Activated CD8-positive, alpha-beta T cell treated with anti-CD3 and anti-CD28 coated beads for 36 hours (primary cell): ENCODE measurements at regions of chr10 and their contacts with region 1.

Region 1: GRCh38 chr10:11170993-11171851 is 153.6 kb downstream of the CELF2 start:
- DNase-seq: peak; percentile 81
- ATAC-seq: peak; percentile 62
- H3K4me3 Mint-ChIP-seq: no peak overlapping the region
- H3K27ac Mint-ChIP-seq: no peak overlapping the region
- H3K4me1 Mint-ChIP-seq: peaks cover 38% of the 10 kb centered on the region
- H3K27me3 Mint-ChIP-seq: no peaks in the 10 kb centered on the region
- CTCF ChIP-seq: no peak

Region 2: GRCh38 chr10:10765017-10765416 is 406.2 kb before region 1 on chr10:
- CTCF ChIA-PET with region 1: no interaction called
- POLR2A ChIA-PET with region 1: no interaction called
- intact Hi-C with region 1: no loop called
- DNase-seq: no peak
- ATAC-seq: no peak
- H3K4me3 Mint-ChIP-seq: no peak overlapping the region
- H3K27ac Mint-ChIP-seq: no peak overlapping the region
- H3K4me1 Mint-ChIP-seq: no peaks in the 10 kb centered on the region
- H3K27me3 Mint-ChIP-seq: peaks cover 1% of the 10 kb centered on the region
- CTCF ChIP-seq: no peak

Region 3: GRCh38 chr10:10824591-10825148 is 346.6 kb before region 1 on chr10:
- CTCF ChIA-PET with region 1: no interaction called
- POLR2A ChIA-PET with region 1: no interaction called
- intact Hi-C with region 1: no loop called
- DNase-seq: no peak
- ATAC-seq: no peak
- H3K4me3 Mint-ChIP-seq: no peak overlapping the region
- H3K27ac Mint-ChIP-seq: no peak overlapping the region
- H3K4me1 Mint-ChIP-seq: no peaks in the 10 kb centered on the region
- H3K27me3 Mint-ChIP-seq: peaks cover 16% of the 10 kb centered on the region
- CTCF ChIP-seq: no peak

Region 4: GRCh38 chr10:11218395-11218794 is 47.2 kb after region 1 on chr10:
- CTCF ChIA-PET with region 1: interaction called, 4 read pairs
- POLR2A ChIA-PET with region 1: interaction called, 12 read pairs
- intact Hi-C with region 1: no loop called
- DNase-seq: peak; percentile 76
- ATAC-seq: peak; percentile 92
- H3K4me3 Mint-ChIP-seq: peak overlapping the region; percentile 28
- H3K27ac Mint-ChIP-seq: peak overlapping the region; percentile 97
- H3K4me1 Mint-ChIP-seq: peaks cover 94% of the 10 kb centered on the region
- H3K27me3 Mint-ChIP-seq: no peaks in the 10 kb centered on the region
- CTCF ChIP-seq: no peak

Region 5: DNA sequence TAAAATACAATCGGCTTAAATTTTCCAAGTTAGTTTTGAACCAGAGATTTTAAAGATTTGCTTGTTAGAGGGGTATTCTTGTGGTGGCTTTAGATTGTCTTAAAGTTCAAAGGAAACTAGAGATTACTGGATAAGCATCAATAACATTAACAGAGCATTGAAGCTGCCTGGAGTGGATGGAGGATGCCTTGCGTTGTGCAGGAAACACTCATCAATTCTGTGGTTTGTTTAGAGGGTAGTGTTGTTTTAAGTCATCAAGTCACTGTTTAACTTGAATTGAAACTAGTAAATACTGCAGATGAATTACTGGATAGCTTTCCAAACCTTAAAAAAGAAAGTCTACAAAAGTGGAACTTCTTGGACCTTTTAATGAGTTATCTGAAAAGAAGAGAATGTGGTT is 65.0 kb after region 1 on chr10:
- CTCF ChIA-PET with region 1: interaction called, 7 read pairs
- POLR2A ChIA-PET with region 1: interaction called, 59 read pairs
- intact Hi-C with region 1: no loop called
- DNase-seq: peak; percentile 57
- ATAC-seq: peak; percentile 48
- H3K4me3 Mint-ChIP-seq: peak overlapping the region; percentile 20
- H3K27ac Mint-ChIP-seq: peak overlapping the region; percentile 92
- H3K4me1 Mint-ChIP-seq: peaks cover 95% of the 10 kb centered on the region
- H3K27me3 Mint-ChIP-seq: no peaks in the 10 kb centered on the region
- CTCF ChIP-seq: no peak